Mucosa of descending colon (tissue), 3 donors: ENCODE measurements at regions of chr2 and their contacts with region 1.

Region 1: DNA sequence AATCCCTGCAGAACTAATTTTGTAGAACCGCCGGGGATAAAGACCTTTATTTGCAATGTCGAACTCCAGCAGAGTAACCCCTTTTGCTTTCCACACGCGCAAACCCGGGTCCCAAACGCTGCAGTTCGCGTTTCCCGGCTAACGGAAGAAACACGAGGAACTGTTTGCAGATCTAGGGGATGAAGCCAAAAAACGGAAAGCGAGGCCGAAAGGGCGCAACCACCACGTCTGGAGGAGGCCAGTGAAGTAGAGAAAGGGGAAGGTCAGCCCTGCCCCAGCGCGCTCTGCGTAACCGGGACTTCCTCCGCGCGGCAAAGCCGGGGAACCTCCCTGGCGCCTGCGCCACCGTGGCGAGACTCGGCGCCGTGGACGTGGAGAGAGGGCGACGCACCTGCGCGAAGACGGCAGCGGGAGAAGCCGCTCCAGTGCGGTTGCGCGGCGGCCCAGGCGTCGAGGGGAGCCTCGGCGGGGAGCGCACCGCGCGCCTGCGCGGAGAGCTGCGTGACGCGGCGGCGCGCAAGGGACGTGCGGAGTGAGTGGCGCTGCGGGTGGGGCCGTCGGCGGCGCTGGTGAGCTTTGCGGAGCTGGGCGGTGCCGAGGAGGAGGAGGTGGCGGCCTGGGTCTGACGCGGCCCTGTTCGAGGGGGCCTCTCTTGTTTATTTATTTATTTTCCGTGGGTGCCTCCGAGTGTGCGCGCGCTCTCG is at the start of gene PPP1CB:
- DNase-seq: peak; percentile 92 to 98 (median 98)
- ATAC-seq: peak; percentile 94
- H3K4me3 ChIP-seq: peak within 1 kb of the TSS; percentile 100
- H3K4me1 ChIP-seq: peaks cover 34% of the 10 kb centered on the region
- CTCF ChIP-seq: peak; percentile 10
- total RNA-seq, gene PPP1CB: 302 to 439 (median 308) TPM

Region 2: GRCh38 chr2:28594289-28595108 is 156.9 kb before region 1 on chr2:
- intact Hi-C with region 1: loop called (anchors 10 kb)
- DNase-seq: peak; percentile 89 to 100 (median 94)
- ATAC-seq: peak; percentile 96
- H3K4me3 ChIP-seq: no peak overlapping the region
- H3K4me1 ChIP-seq: peaks cover 11% of the 10 kb centered on the region
- CTCF ChIP-seq: peak; percentile 60

Region 3: DNA sequence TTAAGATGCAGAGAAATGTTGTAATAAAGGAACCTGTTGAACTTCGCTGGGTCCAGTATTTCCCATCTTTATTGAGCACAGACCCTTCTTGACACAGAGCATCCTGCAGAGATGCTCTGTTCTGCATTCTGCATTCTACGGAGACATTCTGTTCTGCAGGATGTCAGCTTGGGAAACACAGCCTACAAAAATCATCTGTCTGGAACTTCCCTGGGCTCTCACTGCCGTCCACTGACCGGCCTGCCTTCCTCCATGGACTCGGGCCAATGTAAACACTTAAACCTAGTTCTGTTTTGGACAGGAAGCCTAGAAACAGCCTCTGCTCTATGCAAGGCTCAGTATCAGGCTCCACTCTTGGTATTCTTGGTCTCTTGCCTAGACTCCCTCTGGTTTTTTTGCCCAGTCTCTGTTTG is 89.8 kb before region 1 on chr2:
- intact Hi-C with region 1: loop called (anchors 5 kb)
- DNase-seq: peak; percentile 63 to 77 (median 68)
- ATAC-seq: peak; percentile 51
- H3K4me3 ChIP-seq: no peak overlapping the region
- H3K4me1 ChIP-seq: peaks cover 61% of the 10 kb centered on the region
- CTCF ChIP-seq: no peak

Region 4: GRCh38 chr2:28674062-28674712 is 77.2 kb before region 1 on chr2:
- intact Hi-C with region 1: no loop called
- DNase-seq: no peak
- ATAC-seq: no peak
- H3K4me3 ChIP-seq: no peak overlapping the region
- H3K4me1 ChIP-seq: no peaks in the 10 kb centered on the region
- CTCF ChIP-seq: no peak